ENCODE measurements at regions of chr13 and their contacts with region 1.

Region 1: GRCh38 chr13:22740264-22740663 is 440.5 kb upstream of the SGCG start:
- DNase-seq: no peak
- ATAC-seq: no peak

Region 2: GRCh38 chr13:22278336-22278929 is 461.8 kb before region 1 on chr13:
- intact Hi-C with region 1: loop called (anchors 10 kb)
- DNase-seq: no peak
- ATAC-seq: no peak

Measured in Right ventricle myocardium inferior (tissue), 1 donor.